Aorta (tissue), 5 donors: ENCODE measurements at regions of chr11 and their contacts with region 1.

Region 1: GRCh38 chr11:118956094-118956846 is at the start of gene UPK2:
- DNase-seq: peak; percentile 91 to 96
- ATAC-seq: peak; percentile 94
- H3K4me3 ChIP-seq: no peak within 1 kb of the TSS
- H3K27ac ChIP-seq: no peak within 1 kb of the TSS
- H3K4me1 ChIP-seq: no peaks in the 10 kb centered on the region
- H3K27me3 ChIP-seq: no peaks in the 10 kb centered on the region
- total RNA-seq, gene UPK2: not detected

Region 2: DNA sequence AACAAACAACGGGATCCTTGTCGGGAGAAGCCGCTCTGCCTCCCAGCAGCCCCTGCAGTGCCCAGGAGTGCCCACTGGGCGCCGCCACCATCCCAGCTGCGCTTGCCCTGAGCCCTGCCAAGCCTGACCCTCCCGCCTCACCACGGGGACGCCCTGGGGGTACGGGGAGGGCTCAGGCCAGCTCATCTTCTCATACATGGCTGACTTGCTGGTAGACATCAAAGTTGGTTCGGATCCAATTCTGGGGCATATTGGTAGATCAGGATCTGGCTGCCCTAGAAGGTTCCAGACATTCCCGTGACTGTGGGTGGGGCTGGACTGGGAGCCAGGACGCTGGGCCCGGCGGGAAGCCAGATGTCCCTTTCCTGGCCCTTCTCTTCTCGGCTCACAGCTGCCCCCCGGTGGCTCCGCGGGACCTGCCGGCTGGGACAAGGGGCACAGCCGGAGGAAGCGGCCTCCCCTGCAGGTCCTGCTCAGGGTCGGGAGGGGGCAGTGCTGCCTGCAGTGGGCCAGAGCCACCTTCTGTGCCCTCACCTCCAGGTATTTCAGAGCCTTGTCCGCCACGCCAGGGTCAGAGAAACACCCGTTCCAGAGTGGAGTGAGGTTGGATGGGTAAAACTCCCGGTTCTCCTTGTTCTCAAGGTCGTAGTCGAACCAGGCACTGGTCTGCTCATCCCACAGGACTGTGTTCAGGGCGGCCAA is 266.3 kb before region 1 on chr11:
- intact Hi-C with region 1: loop called (anchors 1 to 2 kb)
- DNase-seq: peak; percentile 95 to 97
- ATAC-seq: peak; percentile 97
- H3K4me3 ChIP-seq: no peak overlapping the region
- H3K27ac ChIP-seq: peak overlapping the region in 1 of 2 donors; percentile 27
- H3K4me1 ChIP-seq: no peaks in the 10 kb centered on the region
- H3K27me3 ChIP-seq: no peaks in the 10 kb centered on the region

Region 3: GRCh38 chr11:118907051-118908042 is 48.9 kb before region 1 on chr11:
- intact Hi-C with region 1: loop called (anchors 2 kb)
- DNase-seq: peak; percentile 85 to 93
- ATAC-seq: peak; percentile 66
- H3K4me3 ChIP-seq: no peak overlapping the region
- H3K27ac ChIP-seq: peak overlapping the region in 1 of 2 donors; percentile 11
- H3K4me1 ChIP-seq: no peaks in the 10 kb centered on the region
- H3K27me3 ChIP-seq: no peaks in the 10 kb centered on the region